ENCODE measurements at regions of chr18 and their contacts with region 1.

Region 1: GRCh38 chr18:658001-658946 is 821 bp downstream of the TYMS start:
- DNase-seq: peak; percentile 88
- ATAC-seq: peak; percentile 73
- H3K4me3 Mint-ChIP-seq: peak overlapping the region; percentile 99
- H3K27ac Mint-ChIP-seq: peak overlapping the region; percentile 94
- H3K4me1 Mint-ChIP-seq: peaks cover 52% of the 10 kb centered on the region
- H3K27me3 Mint-ChIP-seq: no peaks in the 10 kb centered on the region

Region 2: DNA sequence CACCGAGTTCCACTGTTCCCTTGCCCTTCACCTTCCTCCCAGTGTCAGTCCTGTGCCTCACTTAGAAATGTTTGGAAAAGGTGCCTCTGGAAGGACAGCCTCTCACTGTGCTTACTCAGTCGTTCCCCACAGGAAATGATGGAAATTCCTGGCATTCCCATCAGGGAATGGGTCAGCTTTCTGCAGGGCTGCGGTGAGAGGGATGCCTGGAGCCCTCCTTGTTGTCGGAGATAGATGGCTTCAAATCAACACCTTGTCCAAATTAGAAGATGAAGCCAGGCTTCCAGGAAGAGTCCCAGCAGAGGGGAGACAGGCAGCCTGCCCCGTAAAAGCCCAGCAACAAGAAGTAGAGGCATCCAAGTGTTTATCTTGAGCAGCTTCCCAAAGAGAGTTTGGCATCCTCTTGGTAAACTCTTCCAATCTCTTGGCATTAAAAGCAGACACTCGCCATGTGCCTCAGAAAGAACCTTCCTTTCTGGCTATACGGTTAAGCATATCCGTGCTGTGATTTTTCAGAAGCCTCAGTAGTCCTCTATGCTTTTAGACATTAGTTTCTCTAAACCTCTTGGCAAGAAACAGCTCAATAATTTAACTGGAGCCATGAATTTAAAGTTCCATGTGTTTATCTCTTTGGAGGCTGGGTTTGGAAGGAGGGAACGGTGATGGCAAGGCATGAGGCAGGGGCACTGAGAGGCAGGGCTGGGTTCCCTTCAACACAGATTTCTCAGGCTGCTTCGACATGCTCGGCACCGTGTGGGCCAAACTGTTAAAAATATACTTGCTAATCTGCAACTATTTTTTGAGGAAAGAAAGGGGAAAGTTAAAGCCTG is 182.9 kb before region 1 on chr18:
- CTCF ChIA-PET with region 1: no interaction called
- POLR2A ChIA-PET with region 1: no interaction called
- DNase-seq: no peak
- ATAC-seq: no peak
- H3K4me3 Mint-ChIP-seq: no peak overlapping the region
- H3K27ac Mint-ChIP-seq: no peak overlapping the region
- H3K4me1 Mint-ChIP-seq: no peaks in the 10 kb centered on the region
- H3K27me3 Mint-ChIP-seq: no peaks in the 10 kb centered on the region

Region 3: GRCh38 chr18:589228-589627 is 69.0 kb before region 1 on chr18:
- CTCF ChIA-PET with region 1: no interaction called
- POLR2A ChIA-PET with region 1: no interaction called
- DNase-seq: no peak
- ATAC-seq: no peak
- H3K4me3 Mint-ChIP-seq: no peak overlapping the region
- H3K27ac Mint-ChIP-seq: no peak overlapping the region
- H3K4me1 Mint-ChIP-seq: no peaks in the 10 kb centered on the region
- H3K27me3 Mint-ChIP-seq: peaks cover 6% of the 10 kb centered on the region

Region 4: GRCh38 chr18:623761-624620 is 34.3 kb before region 1 on chr18:
- CTCF ChIA-PET with region 1: interaction called, 20 read pairs
- POLR2A ChIA-PET with region 1: interaction called, 11 read pairs
- DNase-seq: peak; percentile 80
- ATAC-seq: peak; percentile 89
- H3K4me3 Mint-ChIP-seq: no peak overlapping the region
- H3K27ac Mint-ChIP-seq: no peak overlapping the region
- H3K4me1 Mint-ChIP-seq: peaks cover 2% of the 10 kb centered on the region
- H3K27me3 Mint-ChIP-seq: peaks cover 31% of the 10 kb centered on the region

Region 5: GRCh38 chr18:681985-682384 is 23.7 kb after region 1 on chr18:
- CTCF ChIA-PET with region 1: interaction called, 6 read pairs
- POLR2A ChIA-PET with region 1: interaction called, 32 read pairs
- DNase-seq: peak; percentile 87
- ATAC-seq: peak; percentile 96
- H3K4me3 Mint-ChIP-seq: peak overlapping the region; percentile 47
- H3K27ac Mint-ChIP-seq: peak overlapping the region; percentile 97
- H3K4me1 Mint-ChIP-seq: peaks cover 32% of the 10 kb centered on the region
- H3K27me3 Mint-ChIP-seq: no peaks in the 10 kb centered on the region

Region 6: DNA sequence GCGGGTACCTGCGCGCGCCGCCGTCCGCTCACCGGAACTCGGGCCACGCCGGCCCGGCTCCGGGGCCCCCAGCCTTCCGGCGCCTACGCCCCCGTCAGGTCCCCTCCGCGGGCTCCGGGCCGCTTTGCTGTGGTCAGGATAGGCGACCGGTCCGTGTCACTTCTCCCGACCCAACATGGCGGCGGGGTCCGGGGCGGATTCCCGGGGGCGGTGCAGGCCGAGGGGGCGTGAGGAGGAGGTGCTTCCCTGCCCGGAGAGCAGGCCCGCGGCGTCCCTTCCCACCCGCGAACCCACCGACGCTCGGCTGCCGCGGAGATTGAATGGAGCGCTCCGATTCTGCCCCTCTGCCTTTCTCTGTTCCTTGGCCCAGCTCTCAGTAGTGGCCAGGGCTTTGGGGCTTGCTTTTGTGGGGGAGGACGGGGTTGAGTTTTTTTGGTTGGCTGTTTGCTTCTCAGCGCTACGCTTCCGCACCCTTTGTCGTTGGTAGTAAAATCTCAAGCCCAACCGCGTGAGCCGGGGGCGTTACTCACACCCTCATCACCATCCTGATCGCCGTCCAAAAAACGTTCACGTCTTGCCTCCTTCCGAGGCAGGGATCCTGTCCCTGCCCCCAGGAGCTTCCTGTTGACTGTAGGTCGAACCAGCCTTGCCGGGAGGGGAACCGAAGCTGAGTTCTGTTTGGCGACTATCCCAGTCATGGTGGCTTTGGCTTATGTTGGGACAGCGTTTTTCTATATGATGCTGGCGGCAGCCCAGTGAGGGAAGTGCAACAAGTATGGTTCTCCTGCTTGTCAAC is 154.3 kb after region 1 on chr18:
- CTCF ChIA-PET with region 1: no interaction called
- POLR2A ChIA-PET with region 1: interaction called, 18 read pairs
- DNase-seq: peak; percentile 84
- ATAC-seq: peak; percentile 66
- H3K4me3 Mint-ChIP-seq: peak overlapping the region; percentile 79
- H3K27ac Mint-ChIP-seq: peak overlapping the region; percentile 98
- H3K4me1 Mint-ChIP-seq: peaks cover 68% of the 10 kb centered on the region
- H3K27me3 Mint-ChIP-seq: no peaks in the 10 kb centered on the region

Measured in activated CD8-positive, alpha-beta T cell treated with anti-CD3 and anti-CD28 coated beads, Interleukin-2, amount 10 ng/mL, durations not matched to agents 7 days and 5 days (primary cell).